ENCODE measurements at regions of chr9 and their contacts with region 1.

Region 1: GRCh38 chr9:124934290-124934689 is 6.6 kb downstream of the GOLGA1 start:
- DNase-seq: no peak
- ATAC-seq: no peak
- H3K4me3 ChIP-seq: no peak overlapping the region
- H3K27ac ChIP-seq: no peak overlapping the region
- H3K4me1 ChIP-seq: no peaks in the 10 kb centered on the region
- H3K27me3 ChIP-seq: no peaks in the 10 kb centered on the region
- CTCF ChIP-seq: no peak

Region 2: GRCh38 chr9:124879226-124879625 is 55.1 kb before region 1 on chr9:
- intact Hi-C with region 1: loop called in 1 of 2 experiments (anchors 5 kb)
- DNase-seq: no peak
- ATAC-seq: no peak
- H3K4me3 ChIP-seq: no peak overlapping the region
- H3K27ac ChIP-seq: no peak overlapping the region
- H3K4me1 ChIP-seq: peaks cover under 1% of the 10 kb centered on the region
- H3K27me3 ChIP-seq: no peaks in the 10 kb centered on the region
- CTCF ChIP-seq: no peak

Region 3: GRCh38 chr9:125332527-125332926 is 398.2 kb after region 1 on chr9:
- intact Hi-C with region 1: loop called in 1 of 2 experiments (anchors 10 kb)
- DNase-seq: no peak
- ATAC-seq: peak; percentile 78 to 87 (median 86)
- H3K4me3 ChIP-seq: no peak overlapping the region
- H3K27ac ChIP-seq: peak overlapping the region; percentile 66
- H3K4me1 ChIP-seq: no peaks in the 10 kb centered on the region
- H3K27me3 ChIP-seq: no peaks in the 10 kb centered on the region
- CTCF ChIP-seq: no peak